ENCODE measurements at regions of chr2 and their contacts with region 1.

Region 1: GRCh38 chr2:124001696-124002430 is 23.2 kb upstream of the CNTNAP5 start:
- DNase-seq: no peak
- H3K4me3 ChIP-seq: no peak overlapping the region
- H3K27ac ChIP-seq: no peak overlapping the region
- H3K4me1 ChIP-seq: no peaks in the 10 kb centered on the region
- H3K27me3 ChIP-seq: no peaks in the 10 kb centered on the region
- CTCF ChIP-seq: no peak
- POLR2A ChIP-seq: no peak

Region 2: GRCh38 chr2:122112216-122113005 is 1889.5 kb before region 1 on chr2:
- intact Hi-C with region 1: no loop called
- DNase-seq: no peak
- H3K4me3 ChIP-seq: no peak overlapping the region
- H3K27ac ChIP-seq: no peak overlapping the region
- H3K4me1 ChIP-seq: no peaks in the 10 kb centered on the region
- H3K27me3 ChIP-seq: no peaks in the 10 kb centered on the region
- CTCF ChIP-seq: no peak
- POLR2A ChIP-seq: no peak

Region 3: GRCh38 chr2:123913143-123913735 is 88.6 kb before region 1 on chr2:
- intact Hi-C with region 1: no loop called
- DNase-seq: no peak
- H3K4me3 ChIP-seq: no peak overlapping the region
- H3K27ac ChIP-seq: no peak overlapping the region
- H3K4me1 ChIP-seq: no peaks in the 10 kb centered on the region
- H3K27me3 ChIP-seq: no peaks in the 10 kb centered on the region
- CTCF ChIP-seq: no peak
- POLR2A ChIP-seq: no peak

Region 4: GRCh38 chr2:124065636-124066035 is 63.8 kb after region 1 on chr2:
- intact Hi-C with region 1: loop called (anchors 2 kb)
- DNase-seq: no peak
- H3K4me3 ChIP-seq: no peak overlapping the region
- H3K27ac ChIP-seq: no peak overlapping the region
- H3K4me1 ChIP-seq: no peaks in the 10 kb centered on the region
- H3K27me3 ChIP-seq: no peaks in the 10 kb centered on the region
- CTCF ChIP-seq: no peak
- POLR2A ChIP-seq: no peak

Measured in vagina (tissue), 2 donors.